ENCODE measurements at regions of chr4 and their contacts with region 1.

Region 1: DNA sequence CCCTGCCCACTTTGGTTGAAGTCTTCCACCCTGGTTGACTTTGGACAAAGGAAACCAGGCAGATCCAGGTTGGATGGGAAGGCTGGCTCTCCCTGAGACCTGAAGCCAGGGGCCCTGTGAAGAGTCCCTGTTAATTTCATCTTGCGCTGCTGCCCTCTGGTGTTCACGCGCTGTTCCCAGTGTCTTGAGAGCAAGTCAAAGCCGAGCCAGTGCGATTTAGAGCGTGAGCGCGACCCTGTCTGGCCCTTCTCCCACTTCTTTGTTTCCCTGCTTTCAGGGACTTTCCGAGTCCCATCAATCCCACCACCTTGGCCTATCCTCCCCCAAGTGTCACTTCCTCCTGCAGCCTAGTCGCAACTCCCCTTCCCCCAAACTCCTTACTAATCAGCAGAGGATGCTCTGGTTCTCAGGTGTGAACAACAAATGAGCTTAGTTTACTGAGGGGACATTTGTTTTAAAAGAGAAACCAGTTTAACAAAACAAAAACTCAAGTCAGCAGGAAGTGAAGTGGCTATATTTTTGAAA is 25.8 kb upstream of the CHRNA9 start:
- DNase-seq: peak; percentile 72 to 92 (median 76)
- ATAC-seq: peak; percentile 90
- H3K4me3 ChIP-seq: no peak overlapping the region
- H3K27ac ChIP-seq: no peak overlapping the region; the same call in 2 of the 3 replicates
- H3K4me1 ChIP-seq: peaks cover 12 to 49% of the 10 kb centered on the region in 2 experiments
- H3K27me3 ChIP-seq: no peaks in the 10 kb centered on the region
- CTCF ChIP-seq: peak; percentile 90 to 92 (median 91)
- EP300 ChIP-seq: no peak
- POLR2A ChIP-seq: no peak
- RAD21 ChIP-seq: peak; percentile 84 to 93

Region 2: DNA sequence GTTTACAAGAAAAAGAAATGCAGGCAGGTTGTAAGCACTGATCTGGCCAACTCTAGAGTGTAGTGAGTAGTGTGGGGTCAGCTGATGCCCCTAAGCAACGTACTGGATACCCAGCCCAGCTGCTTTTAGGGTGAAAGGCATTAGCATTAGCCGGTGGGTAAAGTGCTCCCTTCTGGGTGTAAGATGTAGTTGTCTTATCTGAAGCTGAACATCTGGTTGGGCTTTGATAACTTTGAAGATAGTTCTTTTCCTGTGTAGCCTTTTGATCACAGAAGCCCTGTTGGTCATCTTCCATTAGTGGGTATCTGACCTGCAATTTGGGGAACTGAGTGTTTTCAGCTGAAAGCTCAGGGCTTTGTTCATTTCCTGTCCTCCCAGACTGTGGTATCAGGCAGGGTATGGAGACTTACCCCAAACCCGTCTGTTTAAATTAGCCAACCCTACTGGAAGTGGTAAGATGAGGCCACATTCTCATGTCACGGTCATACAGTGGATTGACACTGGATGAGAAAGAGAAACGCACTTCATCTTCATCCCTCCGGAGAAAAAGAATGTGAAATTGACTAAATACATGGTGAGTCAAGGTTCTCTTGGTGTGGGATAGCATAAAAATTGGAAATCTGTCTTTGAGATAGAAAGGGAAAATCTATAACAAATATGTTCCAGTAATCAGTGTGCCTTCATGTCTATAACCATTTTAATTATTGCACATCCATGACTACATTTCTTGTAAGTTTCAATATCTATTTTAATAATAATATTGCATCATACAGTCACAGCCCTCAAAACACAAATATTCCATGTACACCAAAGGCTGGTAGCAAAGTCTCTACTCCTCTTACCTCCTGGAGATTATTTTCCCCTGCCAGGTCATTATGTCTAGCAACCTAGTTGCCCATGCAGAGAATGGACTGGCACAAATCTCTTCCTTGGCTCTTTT is 103.8 kb before region 1 on chr4:
- CTCF ChIA-PET with region 1: no interaction called
- POLR2A ChIA-PET with region 1: no interaction called
- in situ Hi-C with region 1: no loop called
- intact Hi-C with region 1: loop called (anchors 2 kb)
- DNase-seq: peak; percentile 43 to 85 (median 54)
- ATAC-seq: peak; percentile 34
- H3K4me3 ChIP-seq: peak overlapping the region; percentile 46
- H3K27ac ChIP-seq: peak overlapping the region; percentile 97
- H3K4me1 ChIP-seq: peaks cover 26 to 32% of the 10 kb centered on the region in 2 experiments; a peak in 4 of 5 replicates
- H3K27me3 ChIP-seq: no peaks in the 10 kb centered on the region
- CTCF ChIP-seq: no peak
- EP300 ChIP-seq: peak; percentile 92
- POLR2A ChIP-seq: peak; percentile 63
- RAD21 ChIP-seq: no peak

Region 3: DNA sequence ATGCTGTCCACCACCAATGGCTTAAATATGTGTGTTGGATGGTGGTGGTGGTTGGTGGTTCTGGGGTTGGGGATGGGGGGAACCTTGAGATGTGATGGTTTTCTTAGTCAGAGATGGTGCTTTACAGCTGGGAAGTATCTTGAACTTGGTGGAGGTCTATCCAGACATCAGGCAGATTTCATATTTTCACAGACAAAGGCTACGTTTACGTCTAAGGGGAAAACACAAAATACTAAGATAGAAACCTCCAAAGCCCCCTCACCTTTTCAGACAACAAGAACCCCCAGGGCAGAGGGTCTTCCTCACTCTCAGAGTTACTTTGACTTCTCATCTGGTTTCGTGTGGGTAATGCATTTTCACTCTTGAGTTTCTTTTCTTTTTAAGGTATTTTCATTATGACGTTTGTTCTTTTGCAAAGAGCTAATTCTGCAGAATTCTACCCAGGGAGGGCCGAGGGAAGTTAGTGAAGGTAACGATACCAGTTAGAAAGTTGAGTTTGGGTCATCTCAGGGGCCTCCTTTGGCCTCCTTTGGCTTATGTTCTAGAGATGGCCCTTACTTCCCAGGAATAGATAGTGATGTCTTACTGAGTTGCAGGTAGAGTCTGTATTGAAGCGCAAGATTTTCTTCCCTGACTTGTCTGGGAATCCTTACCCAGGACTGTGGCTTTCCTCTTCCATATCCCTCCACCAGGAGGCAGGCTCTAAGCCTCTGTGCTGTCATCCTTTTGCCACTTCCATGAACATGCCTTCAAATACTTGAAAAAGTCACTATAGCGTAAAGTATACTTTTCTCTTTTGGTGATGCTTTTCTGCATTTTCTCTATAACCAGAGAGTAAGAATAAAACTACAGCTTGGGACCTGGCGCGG is 80.6 kb before region 1 on chr4:
- CTCF ChIA-PET with region 1: interaction called, 4 read pairs
- POLR2A ChIA-PET with region 1: interaction called, 3 read pairs
- in situ Hi-C with region 1: no loop called
- intact Hi-C with region 1: loop called (anchors 2 kb)
- DNase-seq: peak; percentile 39 to 49 (median 48)
- ATAC-seq: peak; percentile 75
- H3K4me3 ChIP-seq: no peak overlapping the region
- H3K27ac ChIP-seq: 0 out of 3 replicates have a peak overlapping the region, but pooled peaks have one; percentile 6
- H3K4me1 ChIP-seq: peaks cover 6 to 8% of the 10 kb centered on the region in 2 experiments; a peak in 4 of 5 replicates
- H3K27me3 ChIP-seq: no peaks in the 10 kb centered on the region
- CTCF ChIP-seq: peak; percentile 57 to 71 (median 61)
- EP300 ChIP-seq: no peak
- POLR2A ChIP-seq: no peak
- RAD21 ChIP-seq: peak; percentile 62 to 75

Region 4: GRCh38 chr4:40264995-40265909 is 44.1 kb before region 1 on chr4:
- CTCF ChIA-PET with region 1: no interaction called
- POLR2A ChIA-PET with region 1: no interaction called
- in situ Hi-C with region 1: no loop called
- intact Hi-C with region 1: loop called (anchors 5 kb)
- DNase-seq: peak; percentile 66 to 85 (median 71)
- ATAC-seq: peak; percentile 91
- H3K4me3 ChIP-seq: no peak overlapping the region
- H3K27ac ChIP-seq: 0 out of 3 replicates have a peak overlapping the region, but pooled peaks have one; percentile 14
- H3K4me1 ChIP-seq: peaks cover 11 to 25% of the 10 kb centered on the region in 2 experiments
- H3K27me3 ChIP-seq: no peaks in the 10 kb centered on the region
- CTCF ChIP-seq: peak in 2 of 3 experiments; percentile 8 to 11; a peak in 1 of 6 replicates
- EP300 ChIP-seq: no peak
- POLR2A ChIP-seq: no peak
- RAD21 ChIP-seq: 0 out of 4 replicates have a peak, but pooled peaks of 1 of the 2 experiments have one; percentile 12